ENCODE measurements at regions of chr5 and their contacts with region 1.

Region 1: GRCh38 chr5:174418928-174419796 is 305.2 kb upstream of the MSX2 start:
- DNase-seq: peak; percentile 82 to 91
- ATAC-seq: peak; percentile 97 to 99
- H3K4me3 ChIP-seq: peak overlapping the region; percentile 36
- H3K27ac ChIP-seq: peak overlapping the region in 1 of 2 experiments; percentile 37; a peak in 2 of 6 replicates
- H3K4me1 ChIP-seq: peaks cover 5% of the 10 kb centered on the region; the same call in 1 of the 3 replicates
- CTCF ChIP-seq: peak; percentile 97
- EP300 ChIP-seq: no peak
- POLR2A ChIP-seq: no peak
- RAD21 ChIP-seq: peak; percentile 97 to 98

Region 2: DNA sequence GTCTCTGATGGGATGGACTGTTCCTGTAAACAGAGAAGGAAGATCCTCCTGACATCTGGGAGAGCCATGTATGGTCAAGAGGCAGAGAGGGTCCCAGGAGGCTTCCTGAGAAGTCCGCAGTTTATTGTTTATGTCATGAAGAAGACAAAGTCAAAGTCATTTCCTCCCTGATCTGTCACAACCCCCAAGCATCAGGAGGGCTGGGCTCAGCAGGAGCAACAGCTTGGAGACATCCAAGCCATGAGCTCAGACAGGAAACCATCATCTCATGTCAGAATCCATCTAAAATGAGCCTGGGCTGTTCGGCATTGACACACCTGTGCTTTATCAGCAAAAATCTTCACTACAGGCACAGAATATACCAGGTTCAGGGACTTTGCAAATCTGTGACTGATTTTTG is 19.8 kb before region 1 on chr5:
- CTCF ChIA-PET with region 1: interaction called, 63 read pairs
- POLR2A ChIA-PET with region 1: no interaction called
- DNase-seq: no peak
- ATAC-seq: no peak
- H3K4me3 ChIP-seq: no peak overlapping the region
- H3K27ac ChIP-seq: no peak overlapping the region
- H3K4me1 ChIP-seq: no peaks in the 10 kb centered on the region
- CTCF ChIP-seq: no peak
- EP300 ChIP-seq: no peak
- POLR2A ChIP-seq: no peak
- RAD21 ChIP-seq: no peak

Region 3: GRCh38 chr5:174431504-174431903 is 12.3 kb after region 1 on chr5:
- CTCF ChIA-PET with region 1: interaction called, 77 read pairs
- POLR2A ChIA-PET with region 1: no interaction called
- DNase-seq: no peak
- ATAC-seq: no peak
- H3K4me3 ChIP-seq: no peak overlapping the region
- H3K27ac ChIP-seq: no peak overlapping the region
- H3K4me1 ChIP-seq: no peaks in the 10 kb centered on the region
- CTCF ChIP-seq: no peak
- EP300 ChIP-seq: no peak
- POLR2A ChIP-seq: no peak
- RAD21 ChIP-seq: no peak

Region 4: GRCh38 chr5:174729075-174729680 is 310.0 kb after region 1 on chr5:
- CTCF ChIA-PET with region 1: interaction called, 100 read pairs
- POLR2A ChIA-PET with region 1: interaction called, 5 read pairs
- DNase-seq: no peak
- ATAC-seq: no peak
- H3K4me3 ChIP-seq: no peak overlapping the region
- H3K27ac ChIP-seq: no peak overlapping the region
- H3K4me1 ChIP-seq: peaks cover 10% of the 10 kb centered on the region; the same call in 2 of the 3 replicates
- CTCF ChIP-seq: no peak
- EP300 ChIP-seq: no peak
- POLR2A ChIP-seq: no peak
- RAD21 ChIP-seq: no peak

Region 5: DNA sequence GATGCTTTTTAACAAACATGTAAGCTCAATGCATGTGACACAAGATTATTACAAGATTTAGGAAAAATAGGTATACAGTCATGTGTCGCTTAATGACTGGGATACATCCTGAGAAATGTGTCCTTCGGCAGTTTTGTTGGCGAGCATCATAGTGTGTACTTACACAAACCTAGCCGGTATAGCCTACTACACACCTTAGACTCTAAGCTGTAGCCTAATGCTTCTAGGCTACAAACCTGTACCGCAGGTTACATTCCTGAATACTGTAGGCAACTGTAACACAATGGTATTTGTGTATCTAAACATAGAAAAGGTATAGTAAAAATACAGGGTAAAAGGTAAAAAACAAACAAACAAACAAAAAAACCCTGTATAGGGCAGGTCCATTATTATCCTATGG is 332.9 kb after region 1 on chr5:
- CTCF ChIA-PET with region 1: interaction called, 11 read pairs
- POLR2A ChIA-PET with region 1: no interaction called
- DNase-seq: no peak
- ATAC-seq: no peak
- H3K4me3 ChIP-seq: no peak overlapping the region
- H3K27ac ChIP-seq: no peak overlapping the region
- H3K4me1 ChIP-seq: no peaks in the 10 kb centered on the region
- CTCF ChIP-seq: no peak
- EP300 ChIP-seq: no peak
- POLR2A ChIP-seq: no peak
- RAD21 ChIP-seq: no peak

Region 6: GRCh38 chr5:174935854-174936474 is 516.8 kb after region 1 on chr5:
- CTCF ChIA-PET with region 1: interaction called, 23 read pairs
- POLR2A ChIA-PET with region 1: no interaction called
- DNase-seq: peak; percentile 57 to 68
- ATAC-seq: peak; percentile 93 to 97
- H3K4me3 ChIP-seq: no peak overlapping the region
- H3K27ac ChIP-seq: no peak overlapping the region
- H3K4me1 ChIP-seq: no peaks in the 10 kb centered on the region
- CTCF ChIP-seq: peak; percentile 88
- EP300 ChIP-seq: no peak
- POLR2A ChIP-seq: no peak
- RAD21 ChIP-seq: peak; percentile 90 to 91